Left colon (tissue), 2 donors: ENCODE measurements at regions of chr10 and their contacts with region 1.

Region 1: DNA sequence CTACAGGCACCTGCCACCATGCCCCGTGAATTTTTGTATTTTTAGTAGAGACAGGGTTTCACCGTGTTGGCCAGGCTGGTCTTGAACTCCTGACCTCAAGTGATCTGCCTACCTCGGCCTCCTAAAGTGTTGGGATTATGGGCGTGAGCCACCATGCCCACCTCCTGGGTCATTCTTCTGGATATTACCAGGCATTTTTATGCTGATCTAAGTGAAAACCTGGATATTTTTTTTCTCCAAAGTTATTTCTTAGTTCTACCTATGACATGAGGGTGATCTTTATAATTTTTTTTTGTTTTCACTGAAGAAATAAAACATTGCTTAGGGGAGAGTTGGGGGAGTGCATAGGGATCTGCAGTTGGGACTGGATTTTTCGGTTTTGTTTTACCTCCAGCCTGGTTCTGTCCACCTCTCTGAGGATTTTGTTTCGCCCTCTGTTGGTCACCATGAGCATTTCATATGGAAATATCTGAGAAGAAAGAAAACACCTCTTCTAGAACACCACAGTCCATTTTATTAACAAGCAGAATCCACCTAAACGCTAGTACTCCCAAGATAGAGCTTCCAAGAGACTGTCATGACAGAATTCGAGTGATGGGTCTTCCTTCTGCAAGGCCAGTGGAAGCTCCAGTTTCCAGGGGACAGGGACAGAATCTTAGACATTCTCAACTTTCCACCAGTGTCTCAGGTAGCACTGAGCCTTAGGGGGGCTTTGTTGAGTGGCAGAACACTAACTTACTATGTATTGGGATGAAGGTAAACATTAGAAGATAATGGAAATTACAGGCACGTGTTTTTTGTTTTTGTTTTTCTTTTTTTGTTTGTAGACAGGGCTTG is 33.4 kb upstream of the AFAP1L2 start:
- DNase-seq: no peak
- ATAC-seq: peak; percentile 35

Region 2: GRCh38 chr10:114304017-114304570 is 133.6 kb before region 1 on chr10:
- intact Hi-C with region 1: loop called in 1 of 2 experiments (anchors 5 kb)
- DNase-seq: peak; percentile 75 to 87
- ATAC-seq: peak; percentile 89

Region 3: GRCh38 chr10:114767101-114767985 is 329.7 kb after region 1 on chr10:
- intact Hi-C with region 1: no loop called
- DNase-seq: peak; percentile 58 to 74
- ATAC-seq: peak; percentile 79